Activated CD8-positive, alpha-beta memory T cell treated with anti-CD3 and anti-CD28 coated beads, Interleukin-2, amount 10 ng/mL, durations not matched to agents 7 days and 5 days (primary cell): ENCODE measurements at regions of chr6 and their contacts with region 1.

Region 1: GRCh38 chr6:33391278-33391921 is at the start of gene KIFC1:
- DNase-seq: peak; percentile 100
- ATAC-seq: peak; percentile 97
- H3K4me3 Mint-ChIP-seq: peak within 1 kb of the TSS; percentile 99
- H3K27ac Mint-ChIP-seq: peak within 1 kb of the TSS; percentile 95
- H3K4me1 Mint-ChIP-seq: peaks cover 42% of the 10 kb centered on the region
- H3K27me3 Mint-ChIP-seq: no peaks in the 10 kb centered on the region
- total RNA-seq, gene KIFC1: 133 to 187 TPM

Region 2: GRCh38 chr6:33040157-33040556 is 351.2 kb before region 1 on chr6:
- CTCF ChIA-PET with region 1: no interaction called
- DNase-seq: no peak
- ATAC-seq: no peak
- H3K4me3 Mint-ChIP-seq: no peak overlapping the region
- H3K27ac Mint-ChIP-seq: no peak overlapping the region
- H3K4me1 Mint-ChIP-seq: no peaks in the 10 kb centered on the region
- H3K27me3 Mint-ChIP-seq: peaks cover 71% of the 10 kb centered on the region

Region 3: DNA sequence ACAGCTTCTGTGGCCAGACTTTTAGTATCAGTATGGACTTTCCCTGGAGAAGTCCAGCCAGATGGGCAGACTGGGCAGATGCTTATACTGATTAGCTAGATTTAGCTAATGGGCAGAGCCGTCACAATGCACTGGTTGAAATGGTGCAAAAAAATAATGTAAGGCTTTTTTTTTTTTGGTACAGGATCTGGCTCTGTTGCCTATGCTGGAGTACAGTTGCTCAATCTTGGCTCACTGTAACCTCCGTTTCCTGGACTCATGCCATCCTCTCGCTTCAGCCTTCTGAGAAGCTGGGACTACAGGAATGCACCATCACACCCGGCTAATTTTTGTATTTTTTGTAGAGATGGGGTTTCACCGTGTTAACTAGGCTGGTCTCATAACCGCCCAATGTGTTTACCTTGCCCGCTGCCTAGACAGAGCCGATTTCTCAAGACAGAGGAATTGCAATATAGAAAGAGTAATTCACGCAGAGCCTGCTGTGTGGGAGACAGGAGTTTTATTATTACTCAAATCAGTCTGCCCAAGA is 16.2 kb before region 1 on chr6:
- CTCF ChIA-PET with region 1: interaction called, 11 read pairs
- DNase-seq: no peak
- ATAC-seq: no peak
- H3K4me3 Mint-ChIP-seq: no peak overlapping the region
- H3K27ac Mint-ChIP-seq: no peak overlapping the region
- H3K4me1 Mint-ChIP-seq: peaks cover 26% of the 10 kb centered on the region
- H3K27me3 Mint-ChIP-seq: no peaks in the 10 kb centered on the region

Region 4: GRCh38 chr6:33425668-33426577 is 34.5 kb after region 1 on chr6:
- CTCF ChIA-PET with region 1: interaction called, 18 read pairs
- DNase-seq: peak; percentile 90
- ATAC-seq: peak; percentile 69
- H3K4me3 Mint-ChIP-seq: peak overlapping the region; percentile 84
- H3K27ac Mint-ChIP-seq: peak overlapping the region; percentile 86
- H3K4me1 Mint-ChIP-seq: peaks cover 64% of the 10 kb centered on the region
- H3K27me3 Mint-ChIP-seq: peaks cover 15% of the 10 kb centered on the region

Region 5: GRCh38 chr6:33492093-33492492 is 100.7 kb after region 1 on chr6:
- CTCF ChIA-PET with region 1: no interaction called
- DNase-seq: no peak
- ATAC-seq: no peak
- H3K4me3 Mint-ChIP-seq: no peak overlapping the region
- H3K27ac Mint-ChIP-seq: no peak overlapping the region
- H3K4me1 Mint-ChIP-seq: peaks cover 8% of the 10 kb centered on the region
- H3K27me3 Mint-ChIP-seq: peaks cover 22% of the 10 kb centered on the region